ENCODE measurements at regions of chr11 and their contacts with region 1.

Region 1: GRCh38 chr11:59158206-59159068 is 13.5 kb upstream of the DTX4 start:
- DNase-seq: peak; percentile 55
- H3K4me3 Mint-ChIP-seq: no peak overlapping the region
- H3K27ac Mint-ChIP-seq: peak overlapping the region; percentile 30
- H3K4me1 Mint-ChIP-seq: peaks cover 9% of the 10 kb centered on the region
- H3K27me3 Mint-ChIP-seq: peaks cover 11% of the 10 kb centered on the region

Region 2: DNA sequence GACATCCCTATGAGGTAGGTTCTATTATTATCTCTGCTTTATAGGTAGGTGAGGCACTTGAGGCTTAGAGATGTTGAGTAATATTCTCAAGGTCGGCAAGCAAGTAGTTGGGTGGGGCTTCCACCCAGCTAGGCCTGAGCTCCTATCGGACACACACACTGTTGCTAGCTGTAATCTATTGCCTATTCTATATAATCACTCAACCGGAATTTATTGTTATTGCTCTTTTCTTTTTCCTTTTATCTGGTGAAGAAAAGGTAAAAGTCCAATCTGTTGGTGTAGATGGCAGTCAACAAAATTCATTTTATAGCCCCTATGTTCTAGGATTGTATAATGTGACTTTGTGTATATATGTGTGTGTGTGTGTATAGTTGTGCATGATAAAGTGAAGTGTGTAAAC is 966.2 kb before region 1 on chr11:
- intact Hi-C with region 1: no loop called
- DNase-seq: no peak
- H3K4me3 Mint-ChIP-seq: no peak overlapping the region
- H3K27ac Mint-ChIP-seq: no peak overlapping the region
- H3K4me1 Mint-ChIP-seq: no peaks in the 10 kb centered on the region
- H3K27me3 Mint-ChIP-seq: no peaks in the 10 kb centered on the region

Region 3: GRCh38 chr11:58597486-58598144 is 560.8 kb before region 1 on chr11:
- intact Hi-C with region 1: no loop called
- DNase-seq: no peak
- H3K4me3 Mint-ChIP-seq: no peak overlapping the region
- H3K27ac Mint-ChIP-seq: peak overlapping the region; percentile 19
- H3K4me1 Mint-ChIP-seq: peaks cover 72% of the 10 kb centered on the region
- H3K27me3 Mint-ChIP-seq: no peaks in the 10 kb centered on the region

Region 4: GRCh38 chr11:58958500-58958899 is 199.9 kb before region 1 on chr11:
- intact Hi-C with region 1: loop called (anchors 1 kb)
- DNase-seq: no peak
- H3K4me3 Mint-ChIP-seq: no peak overlapping the region
- H3K27ac Mint-ChIP-seq: no peak overlapping the region
- H3K4me1 Mint-ChIP-seq: peaks cover 5% of the 10 kb centered on the region
- H3K27me3 Mint-ChIP-seq: peaks cover 3% of the 10 kb centered on the region

Region 5: GRCh38 chr11:59053387-59053786 is 105.0 kb before region 1 on chr11:
- intact Hi-C with region 1: loop called (anchors 1 kb)
- DNase-seq: peak; percentile 58
- H3K4me3 Mint-ChIP-seq: no peak overlapping the region
- H3K27ac Mint-ChIP-seq: no peak overlapping the region
- H3K4me1 Mint-ChIP-seq: peaks cover 8% of the 10 kb centered on the region
- H3K27me3 Mint-ChIP-seq: peaks cover 31% of the 10 kb centered on the region

Region 6: GRCh38 chr11:59097113-59097708 is 61.2 kb before region 1 on chr11:
- intact Hi-C with region 1: loop called (anchors 1 kb)
- DNase-seq: peak; percentile 52
- H3K4me3 Mint-ChIP-seq: no peak overlapping the region
- H3K27ac Mint-ChIP-seq: no peak overlapping the region
- H3K4me1 Mint-ChIP-seq: peaks cover 18% of the 10 kb centered on the region
- H3K27me3 Mint-ChIP-seq: peaks cover 29% of the 10 kb centered on the region

Region 7: GRCh38 chr11:59142530-59143507 is 15.6 kb before region 1 on chr11 and contains the start of gene FAM111A:
- intact Hi-C with region 1: loop called (anchors 1 kb)
- DNase-seq: peak; percentile 88
- H3K4me3 Mint-ChIP-seq: peak within 1 kb of the TSS; percentile 91
- H3K27ac Mint-ChIP-seq: peak within 1 kb of the TSS; percentile 93
- H3K4me1 Mint-ChIP-seq: peaks cover 62% of the 10 kb centered on the region
- H3K27me3 Mint-ChIP-seq: no peaks in the 10 kb centered on the region
- total RNA-seq, gene FAM111A: 64.8 and 66.4 TPM in 2 replicates

Measured in activated T-helper 1 cell treated with anti-CD3 and anti-CD28 coated beads, Interleukin-12 subunit alpha, Interleukin-12 subunit beta, Interleukin-2, Interleukin-4 antibody, amounts not matched to agents 30 ng/mL and 10 ng/mL and 1 ng/mL, durations not matched to agents 14 hours and 24 hours and 36 hours (primary cell).